ENCODE measurements at regions of chr6 and their contacts with region 1.

Region 1: DNA sequence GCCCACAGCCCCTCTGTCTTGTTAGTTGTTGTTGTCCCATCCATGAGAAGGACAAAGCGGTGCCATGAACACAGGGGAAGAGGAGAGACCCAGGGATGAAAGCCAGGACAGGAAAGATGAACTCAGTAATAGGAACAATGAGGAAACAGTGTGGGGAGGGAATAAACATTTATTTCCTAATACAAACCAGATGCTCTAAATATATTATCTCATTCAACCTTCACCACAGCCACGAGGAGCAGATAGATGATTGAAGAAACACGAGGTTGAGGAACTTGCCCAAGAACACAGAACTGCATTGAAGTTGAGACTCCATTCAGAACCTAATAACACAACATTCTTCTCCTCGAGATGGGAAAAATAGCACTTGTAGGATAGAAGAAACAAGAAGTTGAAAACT is 53.0 kb upstream of the AIG1 start:
- DNase-seq: no peak
- ATAC-seq: no peak
- H3K4me3 ChIP-seq: no peak overlapping the region
- H3K4me3 Mint-ChIP-seq: no peak overlapping the region
- H3K27ac ChIP-seq: no peak overlapping the region
- H3K27ac Mint-ChIP-seq: no peak overlapping the region
- H3K4me1 ChIP-seq: no peaks in the 10 kb centered on the region
- H3K4me1 Mint-ChIP-seq: no peaks in the 10 kb centered on the region
- H3K27me3 ChIP-seq: no peaks in the 10 kb centered on the region
- H3K27me3 Mint-ChIP-seq: no peaks in the 10 kb centered on the region
- CTCF ChIP-seq: no peak

Region 2: GRCh38 chr6:143018955-143019354 is 11.3 kb after region 1 on chr6:
- CTCF ChIA-PET with region 1: no interaction called
- POLR2A ChIA-PET with region 1: no interaction called
- intact Hi-C with region 1: no loop called
- DNase-seq: no peak
- ATAC-seq: no peak
- H3K4me3 ChIP-seq: no peak overlapping the region
- H3K4me3 Mint-ChIP-seq: no peak overlapping the region
- H3K27ac ChIP-seq: no peak overlapping the region
- H3K27ac Mint-ChIP-seq: no peak overlapping the region
- H3K4me1 ChIP-seq: no peaks in the 10 kb centered on the region
- H3K4me1 Mint-ChIP-seq: no peaks in the 10 kb centered on the region
- H3K27me3 ChIP-seq: no peaks in the 10 kb centered on the region
- H3K27me3 Mint-ChIP-seq: peaks cover 3% of the 10 kb centered on the region
- CTCF ChIP-seq: no peak

Region 3: DNA sequence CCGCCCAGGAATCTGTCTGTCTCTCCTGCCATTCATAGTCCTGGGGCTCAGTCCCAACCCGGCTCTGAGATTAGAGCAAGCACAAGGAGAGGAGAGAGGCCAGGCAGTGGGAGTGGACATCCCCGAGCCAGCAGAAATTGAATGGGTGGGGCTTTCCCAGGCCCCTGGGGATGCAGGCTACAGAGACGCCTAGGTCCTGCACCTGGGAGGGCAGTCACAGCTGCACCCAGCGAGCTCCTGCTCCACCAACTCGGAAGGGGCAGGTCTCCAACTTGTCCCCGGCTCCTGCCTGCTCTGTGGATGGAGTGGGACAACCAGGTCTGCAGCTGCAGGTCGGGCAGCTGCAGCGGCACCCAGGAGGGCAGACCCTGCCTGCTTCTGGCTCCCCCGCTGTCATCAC is 42.0 kb after region 1 on chr6:
- CTCF ChIA-PET with region 1: no interaction called
- POLR2A ChIA-PET with region 1: no interaction called
- intact Hi-C with region 1: loop called in 1 of 2 experiments (anchors 1 kb)
- DNase-seq: no peak
- ATAC-seq: no peak
- H3K4me3 ChIP-seq: no peak overlapping the region
- H3K4me3 Mint-ChIP-seq: no peak overlapping the region
- H3K27ac ChIP-seq: no peak overlapping the region
- H3K27ac Mint-ChIP-seq: no peak overlapping the region
- H3K4me1 ChIP-seq: no peaks in the 10 kb centered on the region
- H3K4me1 Mint-ChIP-seq: peaks cover 9% of the 10 kb centered on the region
- H3K27me3 ChIP-seq: no peaks in the 10 kb centered on the region
- H3K27me3 Mint-ChIP-seq: peaks cover 15% of the 10 kb centered on the region
- CTCF ChIP-seq: no peak

Measured in CD8-positive, alpha-beta T cell (primary cell).